ENCODE measurements at regions of chr7 and their contacts with region 1.

Region 1: GRCh38 chr7:38107486-38107893 is 70.6 kb upstream of the STARD3NL start:
- DNase-seq: peak; percentile 51
- ATAC-seq: peak; percentile 96
- H3K4me3 ChIP-seq: no peak overlapping the region
- H3K27ac ChIP-seq: no peak overlapping the region
- H3K4me1 ChIP-seq: no peaks in the 10 kb centered on the region
- H3K27me3 ChIP-seq: peaks cover 12% of the 10 kb centered on the region; the same call in 1 of the 2 replicates
- CTCF ChIP-seq: peak; percentile 95

Region 2: GRCh38 chr7:37901236-37901827 is 206.2 kb before region 1 on chr7:
- CTCF ChIA-PET with region 1: interaction called, 7 read pairs
- POLR2A ChIA-PET with region 1: no interaction called
- in situ Hi-C with region 1: no loop called
- intact Hi-C with region 1: loop called (anchors 2 kb)
- DNase-seq: peak; percentile 28
- ATAC-seq: peak; percentile 62
- H3K4me3 ChIP-seq: no peak overlapping the region
- H3K27ac ChIP-seq: no peak overlapping the region
- H3K4me1 ChIP-seq: no peaks in the 10 kb centered on the region; the same call in 1 of the 2 replicates
- H3K27me3 ChIP-seq: peaks cover 4% of the 10 kb centered on the region; the same call in 1 of the 2 replicates
- CTCF ChIP-seq: peak; percentile 77; the same call in 1 of the 2 replicates

Region 3: DNA sequence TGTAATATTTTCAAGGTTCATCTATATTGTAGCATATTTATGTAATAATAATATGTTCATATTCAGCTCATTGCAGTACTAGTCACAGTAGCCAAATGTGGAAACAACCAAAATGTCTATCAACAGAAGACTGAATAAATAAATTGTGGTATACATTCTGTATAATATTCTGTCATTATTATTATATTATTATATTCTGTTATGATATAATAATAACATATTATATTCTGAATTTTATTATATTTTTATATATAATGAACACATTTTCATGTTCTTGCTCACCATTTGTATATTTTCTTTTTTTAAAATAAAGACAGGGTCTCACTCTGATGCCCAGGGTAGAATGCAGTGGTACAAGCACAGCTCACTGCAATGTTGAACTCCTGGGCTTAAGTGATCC is 20.6 kb before region 1 on chr7:
- CTCF ChIA-PET with region 1: interaction called, 11 read pairs
- POLR2A ChIA-PET with region 1: no interaction called
- in situ Hi-C with region 1: no loop called
- intact Hi-C with region 1: no loop called
- DNase-seq: no peak
- ATAC-seq: no peak
- H3K4me3 ChIP-seq: no peak overlapping the region
- H3K27ac ChIP-seq: no peak overlapping the region
- H3K4me1 ChIP-seq: no peaks in the 10 kb centered on the region
- H3K27me3 ChIP-seq: no peaks in the 10 kb centered on the region
- CTCF ChIP-seq: no peak

Region 4: DNA sequence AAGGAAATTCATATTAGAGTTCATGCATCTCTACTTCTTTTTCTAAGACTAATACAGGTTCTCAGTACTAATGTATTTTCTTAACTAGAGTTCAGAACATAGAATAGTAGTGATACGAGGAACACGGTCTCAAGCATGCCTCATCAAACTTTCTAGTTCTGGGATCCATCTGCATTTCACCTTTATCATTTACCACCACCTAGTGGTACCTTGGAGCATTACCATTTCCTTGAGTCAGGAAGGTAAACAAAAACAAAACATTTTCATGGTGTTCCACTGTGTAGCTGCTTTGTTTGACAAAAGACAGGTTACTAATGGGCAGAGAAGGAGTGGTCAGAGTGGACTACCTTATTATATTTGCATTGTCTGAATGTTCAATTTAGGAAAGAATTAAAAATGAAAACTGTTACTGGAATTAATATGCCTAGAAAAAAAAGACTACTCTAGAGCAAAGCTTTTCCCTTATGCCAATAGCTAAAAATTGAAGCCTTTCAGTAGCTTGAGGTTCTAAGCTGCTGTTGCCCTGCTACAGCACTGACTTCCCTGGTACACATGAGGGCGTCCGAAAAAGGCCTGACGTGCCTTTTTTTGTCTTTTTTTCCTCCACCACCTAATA is 115.1 kb after region 1 on chr7:
- CTCF ChIA-PET with region 1: no interaction called
- POLR2A ChIA-PET with region 1: no interaction called
- in situ Hi-C with region 1: no loop called
- intact Hi-C with region 1: loop called (anchors 1 kb)
- DNase-seq: peak; percentile 54
- ATAC-seq: peak; percentile 80
- H3K4me3 ChIP-seq: no peak overlapping the region
- H3K27ac ChIP-seq: no peak overlapping the region
- H3K4me1 ChIP-seq: no peaks in the 10 kb centered on the region
- H3K27me3 ChIP-seq: no peaks in the 10 kb centered on the region
- CTCF ChIP-seq: peak; percentile 85; the same call in 1 of the 2 replicates

Region 5: DNA sequence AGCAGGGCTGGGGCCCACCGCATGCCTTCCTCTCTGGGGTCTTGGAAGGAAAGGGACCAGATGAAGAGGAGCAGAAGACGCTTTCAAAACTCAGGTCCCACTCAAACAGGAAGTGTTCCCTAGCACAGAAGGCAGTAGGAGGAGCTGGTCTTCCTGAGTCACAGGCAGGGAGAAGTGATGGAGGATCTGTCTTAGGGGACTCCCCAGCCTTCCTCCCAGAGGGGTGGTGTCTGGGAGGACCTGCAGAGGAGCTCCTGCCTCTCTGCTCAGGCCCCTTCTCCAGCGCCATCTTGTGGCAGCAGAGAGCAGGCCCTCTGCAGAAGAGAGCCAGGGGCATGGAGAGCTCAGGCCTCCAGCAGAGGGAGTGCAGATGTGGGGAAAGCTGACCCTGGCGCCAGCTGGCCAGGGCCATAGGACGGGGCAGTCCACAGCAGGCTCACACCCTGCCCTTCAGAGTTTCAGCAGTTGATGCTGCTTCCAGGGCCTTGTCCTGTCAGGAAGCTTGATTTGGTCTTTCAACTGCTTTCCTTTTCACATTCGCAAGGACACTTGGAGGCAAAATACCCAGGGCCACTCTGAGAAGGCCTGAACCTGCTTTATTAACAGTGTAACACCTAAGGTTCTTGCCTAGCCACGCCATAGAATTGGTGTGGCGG is 228.1 kb after region 1 on chr7:
- CTCF ChIA-PET with region 1: no interaction called
- POLR2A ChIA-PET with region 1: no interaction called
- in situ Hi-C with region 1: no loop called
- intact Hi-C with region 1: loop called (anchors 5 kb)
- DNase-seq: peak; percentile 82
- ATAC-seq: peak; percentile 99
- H3K4me3 ChIP-seq: no peak overlapping the region
- H3K27ac ChIP-seq: no peak overlapping the region
- H3K4me1 ChIP-seq: no peaks in the 10 kb centered on the region
- H3K27me3 ChIP-seq: no peaks in the 10 kb centered on the region
- CTCF ChIP-seq: peak; percentile 99

Region 6: GRCh38 chr7:38673795-38674194 is 566.3 kb after region 1 on chr7:
- CTCF ChIA-PET with region 1: no interaction called
- POLR2A ChIA-PET with region 1: no interaction called
- in situ Hi-C with region 1: no loop called
- intact Hi-C with region 1: no loop called
- DNase-seq: peak; percentile 22
- ATAC-seq: no peak
- H3K4me3 ChIP-seq: no peak overlapping the region
- H3K27ac ChIP-seq: no peak overlapping the region
- H3K4me1 ChIP-seq: no peaks in the 10 kb centered on the region
- H3K27me3 ChIP-seq: peaks cover 5% of the 10 kb centered on the region; the same call in 1 of the 2 replicates
- CTCF ChIP-seq: no peak

Measured in Panc1 (cell line).